H1 (cell line): ENCODE measurements at regions of chr3 and their contacts with region 1.

Region 1: GRCh38 chr3:135736740-135737139 is 228.8 kb upstream of the PPP2R3A start:
- DNase-seq: peak; percentile 39 to 75
- H3K4me3 ChIP-seq: no peak overlapping the region
- H3K27ac ChIP-seq: no peak overlapping the region
- H3K4me1 ChIP-seq: peaks cover 0 to 4% (median 1%) of the 10 kb centered on the region in 4 experiments; a peak in 2 of 7 replicates
- H3K27me3 ChIP-seq: no peaks in the 10 kb centered on the region
- CTCF ChIP-seq: peak; percentile 19 to 80 (median 76)
- EP300 ChIP-seq: no peak
- POLR2A ChIP-seq: no peak
- RAD21 ChIP-seq: peak; percentile 90 to 94

Region 2: DNA sequence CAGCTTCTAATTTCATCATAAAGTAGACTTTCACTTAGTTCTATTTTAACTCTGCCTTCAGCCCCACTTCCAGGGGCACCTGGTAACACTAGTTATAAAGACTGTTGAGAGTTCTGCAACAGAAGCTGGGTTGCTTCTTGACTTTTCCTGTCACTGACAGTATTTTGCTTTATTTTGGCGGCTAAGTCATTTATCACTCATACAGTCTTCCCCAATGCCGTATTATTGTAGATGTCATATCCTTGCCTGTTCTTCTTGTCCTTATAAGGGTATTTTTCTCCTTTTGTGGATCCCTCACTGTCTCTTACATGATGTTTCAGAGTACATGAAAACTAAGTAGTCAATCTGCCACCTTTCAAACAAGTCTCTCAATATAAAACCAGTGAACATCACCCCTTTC is 140.2 kb before region 1 on chr3:
- CTCF ChIA-PET with region 1: no interaction called
- POLR2A ChIA-PET with region 1: no interaction called
- DNase-seq: no peak
- H3K4me3 ChIP-seq: no peak overlapping the region
- H3K27ac ChIP-seq: no peak overlapping the region
- H3K4me1 ChIP-seq: no peaks in the 10 kb centered on the region
- H3K27me3 ChIP-seq: no peaks in the 10 kb centered on the region
- CTCF ChIP-seq: no peak
- EP300 ChIP-seq: no peak
- POLR2A ChIP-seq: no peak
- RAD21 ChIP-seq: no peak

Region 3: DNA sequence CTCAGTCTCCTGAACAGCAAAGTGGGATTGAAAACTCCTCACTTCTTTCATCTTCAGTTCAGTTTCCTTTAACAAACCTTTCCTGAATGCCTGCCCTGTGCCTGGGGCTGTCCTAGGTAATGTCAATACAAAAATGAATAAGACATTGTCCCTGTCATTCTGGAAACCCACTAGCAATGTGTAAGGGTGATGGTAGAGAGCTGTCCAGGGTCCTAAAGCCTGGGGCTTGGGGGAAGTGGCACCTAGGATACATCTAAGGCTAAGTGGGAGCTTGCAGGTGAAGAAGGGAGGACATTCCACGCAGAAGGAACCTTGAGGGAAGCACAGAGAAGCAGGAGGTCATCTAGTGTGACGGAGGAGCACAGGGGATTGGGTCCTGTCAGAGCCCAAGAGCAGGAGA is 16.1 kb after region 1 on chr3:
- CTCF ChIA-PET with region 1: interaction called, 11 read pairs
- POLR2A ChIA-PET with region 1: no interaction called
- DNase-seq: no peak
- H3K4me3 ChIP-seq: no peak overlapping the region
- H3K27ac ChIP-seq: no peak overlapping the region
- H3K4me1 ChIP-seq: no peaks in the 10 kb centered on the region
- H3K27me3 ChIP-seq: no peaks in the 10 kb centered on the region
- CTCF ChIP-seq: no peak
- EP300 ChIP-seq: no peak
- POLR2A ChIP-seq: no peak
- RAD21 ChIP-seq: no peak

Region 4: DNA sequence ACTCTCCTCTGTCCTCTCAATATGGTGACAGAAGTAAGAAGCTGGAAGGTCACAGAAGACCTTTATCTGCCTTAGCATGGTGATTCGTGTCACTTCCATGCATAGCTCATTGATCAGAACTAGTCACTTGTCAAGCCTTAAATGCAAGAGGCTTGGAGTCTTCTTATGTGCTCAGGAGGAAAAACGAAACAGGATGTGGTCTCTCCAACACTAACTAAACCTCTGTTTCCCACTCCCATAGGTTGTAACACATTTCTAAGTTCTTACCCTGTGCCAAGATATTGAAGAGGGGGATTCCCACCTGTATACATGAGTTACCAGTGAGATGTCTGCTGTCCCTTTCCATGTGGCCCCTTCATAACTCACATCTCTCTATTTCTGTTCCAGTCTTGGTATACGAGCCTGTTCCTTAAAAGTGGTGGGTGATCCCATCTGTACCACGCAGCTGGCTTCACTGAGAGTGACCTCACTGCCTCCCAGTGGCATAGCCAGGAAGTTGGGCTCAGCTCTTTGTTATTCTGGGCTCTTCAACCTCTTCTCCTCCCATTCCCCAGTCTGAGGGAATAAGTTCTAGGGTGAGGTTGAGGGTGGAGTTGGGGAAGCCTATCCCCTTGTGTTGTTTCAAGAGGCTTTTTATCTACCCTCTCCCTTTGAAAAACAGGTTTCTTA is 25.6 kb after region 1 on chr3:
- CTCF ChIA-PET with region 1: interaction called, 18 read pairs
- POLR2A ChIA-PET with region 1: no interaction called
- DNase-seq: no peak
- H3K4me3 ChIP-seq: no peak overlapping the region
- H3K27ac ChIP-seq: no peak overlapping the region
- H3K4me1 ChIP-seq: no peaks in the 10 kb centered on the region
- H3K27me3 ChIP-seq: no peaks in the 10 kb centered on the region
- CTCF ChIP-seq: peak; percentile 40 to 53 (median 51)
- EP300 ChIP-seq: no peak
- POLR2A ChIP-seq: no peak
- RAD21 ChIP-seq: peak; percentile 59 to 73

Region 5: DNA sequence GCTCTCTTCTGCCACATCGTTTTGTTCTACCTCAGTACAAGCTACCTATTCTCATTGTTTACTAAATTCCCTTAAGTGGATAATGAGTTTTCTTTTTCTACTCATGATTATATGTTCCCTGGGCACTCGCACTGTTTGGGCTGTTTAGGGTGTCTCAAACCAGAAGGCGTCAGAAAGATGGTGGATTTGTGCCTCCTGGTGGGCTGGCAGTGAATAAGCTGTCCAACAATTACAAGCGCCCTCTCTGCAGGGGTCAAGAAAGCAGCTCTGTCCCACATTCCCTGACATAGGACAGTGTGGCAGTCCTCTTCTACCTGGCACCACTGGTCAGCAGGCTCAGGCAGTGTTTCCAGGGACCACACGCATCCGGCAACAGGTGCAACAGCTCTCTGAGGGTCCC is 55.4 kb after region 1 on chr3:
- CTCF ChIA-PET with region 1: interaction called, 23 read pairs
- POLR2A ChIA-PET with region 1: no interaction called
- DNase-seq: no peak
- H3K4me3 ChIP-seq: no peak overlapping the region
- H3K27ac ChIP-seq: no peak overlapping the region
- H3K4me1 ChIP-seq: no peaks in the 10 kb centered on the region
- H3K27me3 ChIP-seq: no peaks in the 10 kb centered on the region
- CTCF ChIP-seq: peak; percentile 34 to 57 (median 39); a peak in 3 of 4 replicates
- EP300 ChIP-seq: no peak
- POLR2A ChIP-seq: no peak
- RAD21 ChIP-seq: peak; percentile 56 to 66

Region 6: DNA sequence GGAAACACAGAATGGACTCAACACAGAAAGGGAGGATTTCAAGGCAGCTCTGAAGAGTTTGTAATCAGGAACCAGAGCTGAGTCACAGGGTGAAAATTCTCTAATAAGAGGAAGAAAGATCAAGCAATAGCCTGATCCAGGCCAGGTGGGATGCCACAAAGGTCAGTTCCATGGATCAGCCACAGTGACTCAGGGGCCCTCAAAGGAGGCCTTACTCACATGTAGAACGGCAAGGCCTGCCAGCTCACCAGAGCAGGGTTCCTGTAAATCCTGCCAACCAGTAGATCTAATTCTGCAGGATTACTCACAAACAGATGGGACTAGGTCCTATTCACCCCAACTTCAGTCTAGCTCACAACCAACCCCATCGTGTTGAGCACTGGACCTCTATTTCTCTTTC is 150.5 kb after region 1 on chr3:
- CTCF ChIA-PET with region 1: interaction called, 14 read pairs
- POLR2A ChIA-PET with region 1: no interaction called
- DNase-seq: no peak
- H3K4me3 ChIP-seq: no peak overlapping the region
- H3K27ac ChIP-seq: no peak overlapping the region
- H3K4me1 ChIP-seq: peaks cover 0 to 4% (median 2%) of the 10 kb centered on the region in 4 experiments; a peak in 2 of 7 replicates
- H3K27me3 ChIP-seq: no peaks in the 10 kb centered on the region
- CTCF ChIP-seq: no peak
- EP300 ChIP-seq: no peak
- POLR2A ChIP-seq: no peak
- RAD21 ChIP-seq: no peak

Region 7: GRCh38 chr3:135895106-135895733 is 158.5 kb after region 1 on chr3:
- CTCF ChIA-PET with region 1: interaction called, 40 read pairs
- POLR2A ChIA-PET with region 1: no interaction called
- DNase-seq: peak; percentile 58 to 87
- H3K4me3 ChIP-seq: no peak overlapping the region
- H3K27ac ChIP-seq: no peak overlapping the region
- H3K4me1 ChIP-seq: no peaks in the 10 kb centered on the region
- H3K27me3 ChIP-seq: no peaks in the 10 kb centered on the region
- CTCF ChIP-seq: peak; percentile 56 to 85 (median 84)
- EP300 ChIP-seq: no peak
- POLR2A ChIP-seq: no peak
- RAD21 ChIP-seq: peak; percentile 97

Region 8: GRCh38 chr3:136042608-136043221 is 306.0 kb after region 1 on chr3:
- CTCF ChIA-PET with region 1: interaction called, 20 read pairs
- POLR2A ChIA-PET with region 1: no interaction called
- DNase-seq: no peak
- H3K4me3 ChIP-seq: no peak overlapping the region
- H3K27ac ChIP-seq: no peak overlapping the region
- H3K4me1 ChIP-seq: no peaks in the 10 kb centered on the region
- H3K27me3 ChIP-seq: no peaks in the 10 kb centered on the region
- CTCF ChIP-seq: peak in 2 of 3 experiments; percentile 48 to 50; a peak in 3 of 4 replicates
- EP300 ChIP-seq: no peak
- POLR2A ChIP-seq: no peak
- RAD21 ChIP-seq: peak; percentile 59 to 68